HEK293 (cell line): ENCODE measurements at regions of chrX and their contacts with region 1.

Region 1: DNA sequence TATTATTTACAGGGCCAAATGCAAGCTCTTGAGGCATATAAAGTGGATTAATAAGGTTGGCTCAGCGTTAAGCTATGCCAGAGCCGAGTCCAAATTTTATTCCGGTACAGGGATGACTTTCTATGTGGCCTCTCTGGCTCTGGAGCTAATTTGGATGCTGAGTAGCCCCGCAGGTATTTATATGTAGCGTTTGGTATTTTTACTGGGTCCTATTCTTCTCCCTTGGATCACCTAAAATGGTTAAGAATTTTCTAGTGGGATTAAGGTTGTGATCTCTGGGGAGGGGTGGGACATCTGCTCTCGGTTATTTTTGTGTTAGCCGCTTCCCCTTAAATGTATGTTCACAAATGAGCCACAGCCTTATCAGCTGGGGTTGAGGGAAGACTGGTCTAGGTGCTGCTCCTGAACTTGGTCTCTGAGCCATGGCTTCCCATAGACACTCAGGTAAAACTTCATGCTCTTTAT is 49.4 kb downstream of the FHL1 start:
- H3K4me3 ChIP-seq: no peak overlapping the region
- H3K27ac ChIP-seq: no peak overlapping the region
- H3K4me1 ChIP-seq: no peaks in the 10 kb centered on the region
- CTCF ChIP-seq: no peak

Region 2: GRCh38 chrX:136477026-136477425 is 280.3 kb after region 1 on chrX:
- CTCF ChIA-PET with region 1: interaction called, 10 read pairs
- POLR2A ChIA-PET with region 1: no interaction called
- H3K4me3 ChIP-seq: no peak overlapping the region
- H3K27ac ChIP-seq: no peak overlapping the region
- H3K4me1 ChIP-seq: 0 out of 2 replicates have a peak, but pooled peaks cover 4% of the 10 kb centered on the region
- CTCF ChIP-seq: no peak